ENCODE measurements at regions of chr4 and their contacts with region 1.

Region 1: DNA sequence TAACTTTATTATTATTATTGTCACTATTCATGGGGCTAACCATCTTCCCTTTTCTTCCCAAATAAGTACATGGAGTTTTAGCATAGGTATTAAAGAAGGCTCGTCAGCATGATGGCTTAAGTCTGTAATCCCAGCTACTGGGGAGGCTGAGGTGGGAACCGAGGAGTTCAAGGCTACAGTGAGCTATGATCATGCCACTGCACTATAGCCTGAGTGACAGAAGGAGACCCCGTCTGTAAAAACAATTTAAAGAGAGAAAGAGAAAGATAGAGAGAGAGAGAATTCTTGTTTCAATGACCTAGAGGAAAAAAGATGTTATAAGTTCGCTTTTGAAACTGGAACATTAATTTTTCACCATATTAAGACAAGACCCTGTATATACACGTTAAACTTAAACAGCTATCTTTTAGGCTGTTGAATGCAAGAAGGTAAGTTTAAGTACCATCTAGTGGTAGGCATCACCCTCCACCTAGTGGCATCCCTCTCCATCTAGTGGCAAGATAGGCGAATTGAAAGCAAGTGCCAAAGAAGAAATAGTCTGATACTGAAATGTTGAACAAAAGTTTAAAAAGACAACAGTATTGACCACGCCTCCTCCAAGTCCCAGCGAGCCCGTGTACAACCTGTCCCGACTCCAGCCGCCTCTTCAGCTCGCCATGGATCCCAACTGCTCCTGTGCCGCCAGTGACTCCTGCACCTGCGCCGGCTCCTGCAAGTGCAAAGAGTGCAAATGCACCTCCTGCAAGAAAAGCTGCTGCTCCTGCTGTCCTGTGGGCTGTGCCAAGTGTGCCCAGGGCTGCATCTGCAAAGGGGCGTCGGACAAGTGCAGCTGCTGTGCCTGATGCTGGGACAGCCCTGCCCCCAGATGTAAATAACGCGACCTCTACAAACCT is 26.0 kb upstream of the YTHDC1 start:
- DNase-seq: peak; percentile 25 to 69 (median 40)
- ATAC-seq: peak; percentile 79 to 96 (median 93)
- H3K4me3 ChIP-seq: peak overlapping the region in 2 of 4 donors; percentile 24 to 35
- H3K27ac ChIP-seq: no peak overlapping the region
- H3K4me1 ChIP-seq: no peaks in the 10 kb centered on the region
- H3K27me3 ChIP-seq: no peaks in the 10 kb centered on the region
- CTCF ChIP-seq: peak; percentile 63 to 78 (median 74)

Region 2: DNA sequence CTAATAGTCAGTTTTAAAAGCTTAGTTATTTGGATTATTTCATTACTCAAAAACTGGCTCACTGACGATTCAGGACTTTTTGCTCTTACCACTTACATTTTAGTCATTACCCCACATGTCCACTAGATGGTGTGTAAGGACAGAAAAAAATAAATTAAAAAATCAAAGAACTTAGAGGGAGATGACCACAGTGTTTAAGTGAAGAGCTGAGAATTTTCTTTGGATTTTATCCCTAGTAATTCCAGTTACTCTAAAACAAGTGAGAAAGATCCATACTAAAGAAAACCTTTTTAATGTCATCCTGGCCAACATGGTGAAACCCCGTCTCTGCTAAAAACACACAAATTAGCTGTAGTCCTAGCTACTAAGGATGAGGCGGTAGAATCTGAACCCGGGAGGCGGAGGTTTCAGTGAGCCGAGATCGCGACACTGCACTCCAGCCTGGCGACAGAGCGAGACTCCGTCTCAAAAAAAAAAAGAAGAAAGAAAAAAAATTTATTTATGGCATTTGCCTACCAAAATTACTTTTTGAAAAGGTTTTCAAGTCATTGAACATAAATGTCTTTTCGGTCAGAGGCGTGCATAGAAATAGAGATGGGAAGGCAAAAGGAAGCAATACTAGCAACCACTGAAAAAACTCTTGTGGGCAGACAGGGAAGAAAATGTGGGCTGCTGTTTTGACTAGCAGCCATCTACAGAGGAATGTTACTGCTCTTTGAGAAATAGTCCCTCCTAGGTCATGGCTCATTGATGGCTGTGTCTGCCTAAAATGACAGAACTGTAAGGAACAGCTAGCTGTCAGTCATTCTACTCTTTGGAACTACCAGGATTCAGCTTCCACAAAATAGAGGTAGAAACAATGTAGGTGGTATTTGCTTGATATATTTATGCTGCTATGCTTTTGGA is 103.8 kb before region 1 on chr4:
- intact Hi-C with region 1: loop called (anchors 5 to 10 kb)
- DNase-seq: no peak
- ATAC-seq: peak; percentile 80 to 96 (median 91)
- H3K4me3 ChIP-seq: peak overlapping the region in 1 of 4 donors; percentile 10
- H3K27ac ChIP-seq: no peak overlapping the region
- H3K4me1 ChIP-seq: no peaks in the 10 kb centered on the region
- H3K27me3 ChIP-seq: no peaks in the 10 kb centered on the region
- CTCF ChIP-seq: peak; percentile 55 to 73 (median 64)

Region 3: DNA sequence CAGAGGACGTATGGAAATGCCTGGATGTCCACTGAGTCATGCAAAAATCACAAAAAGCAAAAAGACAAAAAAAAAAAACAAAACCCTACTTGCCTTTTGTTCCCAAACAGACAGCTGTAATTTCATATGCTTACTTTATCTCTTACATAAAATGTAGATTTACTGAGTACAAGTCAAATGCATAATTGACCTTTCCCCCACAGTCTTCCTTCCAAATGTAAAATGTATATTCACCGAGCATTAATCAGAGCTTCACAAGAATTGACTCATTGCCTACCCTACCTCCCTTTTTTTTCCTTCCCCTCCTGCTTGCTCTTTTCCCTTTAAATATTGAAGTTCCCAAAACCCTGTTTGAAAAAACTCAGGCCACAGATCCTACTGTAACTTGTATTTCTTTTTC is 97.9 kb before region 1 on chr4:
- intact Hi-C with region 1: loop called (anchors 5 to 10 kb)
- DNase-seq: no peak
- ATAC-seq: no peak
- H3K4me3 ChIP-seq: no peak overlapping the region
- H3K27ac ChIP-seq: no peak overlapping the region
- H3K4me1 ChIP-seq: no peaks in the 10 kb centered on the region
- H3K27me3 ChIP-seq: no peaks in the 10 kb centered on the region
- CTCF ChIP-seq: no peak

Region 4: GRCh38 chr4:68581383-68582338 is 205.7 kb after region 1 on chr4:
- intact Hi-C with region 1: no loop called
- DNase-seq: no peak
- ATAC-seq: no peak
- H3K4me3 ChIP-seq: no peak overlapping the region
- H3K27ac ChIP-seq: no peak overlapping the region
- H3K4me1 ChIP-seq: no peaks in the 10 kb centered on the region
- H3K27me3 ChIP-seq: no peaks in the 10 kb centered on the region
- CTCF ChIP-seq: no peak

Region 5: DNA sequence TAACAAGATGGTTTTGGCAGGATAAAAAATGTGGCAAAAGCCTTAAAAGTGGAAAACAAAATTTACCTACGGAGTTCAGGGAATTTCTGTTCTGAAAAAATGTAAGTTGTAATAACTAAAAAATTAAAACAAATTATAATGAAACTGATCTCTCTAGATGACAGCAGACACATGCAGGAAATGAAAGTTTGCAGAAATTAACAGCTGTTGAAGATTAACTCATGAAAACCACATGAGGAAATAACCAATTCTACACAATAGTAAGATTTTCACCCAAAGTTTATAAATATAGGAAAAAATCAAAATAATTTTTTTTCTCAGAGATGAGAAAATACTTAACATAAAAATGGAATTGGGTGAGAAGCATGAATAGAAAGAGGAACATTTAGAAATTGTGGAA is 342.1 kb after region 1 on chr4:
- intact Hi-C with region 1: no loop called
- DNase-seq: no peak
- ATAC-seq: no peak
- H3K4me3 ChIP-seq: no peak overlapping the region
- H3K27ac ChIP-seq: peak overlapping the region in 2 of 4 donors; percentile 9 to 42
- H3K4me1 ChIP-seq: peaks cover 4 to 22% (median 20%) of the 10 kb centered on the region in 3 donors
- H3K27me3 ChIP-seq: no peaks in the 10 kb centered on the region
- CTCF ChIP-seq: no peak